ENCODE measurements at regions of chr19 and their contacts with region 1.

Region 1: DNA sequence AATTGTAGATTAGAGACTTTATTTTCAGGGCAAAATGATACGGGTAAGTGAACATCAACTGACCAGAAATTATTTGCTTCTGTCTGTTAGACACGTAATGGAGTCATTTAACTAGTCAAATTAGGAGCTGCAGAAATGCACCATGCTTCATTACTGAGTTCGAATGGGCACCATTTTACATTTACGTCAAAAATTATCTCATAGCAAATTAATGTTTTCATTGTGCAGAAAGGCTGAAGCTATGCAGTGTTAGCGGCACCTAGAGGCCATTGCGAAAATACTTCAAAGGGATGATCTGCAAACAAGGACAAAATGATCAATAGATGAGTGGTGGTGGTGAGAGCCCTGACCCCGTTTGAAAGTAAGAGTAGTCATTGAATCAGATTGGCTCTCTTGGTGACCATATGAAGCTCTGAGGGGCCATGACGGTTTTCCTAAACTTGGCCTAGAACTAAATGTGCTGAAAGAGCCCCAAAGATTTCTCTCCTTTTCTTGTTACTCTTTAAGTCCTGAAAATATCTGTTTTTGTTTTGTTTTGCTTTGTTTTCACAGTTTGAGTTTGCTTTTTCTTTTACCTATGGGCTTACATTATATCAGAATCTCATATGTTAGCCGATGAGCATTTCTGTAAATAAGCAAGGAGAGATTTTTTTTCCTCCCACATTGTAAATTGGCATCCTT is 277.9 kb downstream of the ZNF536 start:
- DNase-seq: peak in 3 of 10 donors; percentile 62 to 74 (median 62)
- H3K4me3 ChIP-seq: peak overlapping the region in 15 of 59 donors; percentile 2 to 40 (median 13)
- H3K27ac ChIP-seq: peak overlapping the region in 53 of 59 donors; percentile 3 to 85 (median 68)
- H3K27me3 ChIP-seq: peaks cover 0 to 48% (median 9%) of the 10 kb centered on the region in 45 donors
- CTCF ChIP-seq: peak; percentile 51 to 96 (median 86)

Region 2: DNA sequence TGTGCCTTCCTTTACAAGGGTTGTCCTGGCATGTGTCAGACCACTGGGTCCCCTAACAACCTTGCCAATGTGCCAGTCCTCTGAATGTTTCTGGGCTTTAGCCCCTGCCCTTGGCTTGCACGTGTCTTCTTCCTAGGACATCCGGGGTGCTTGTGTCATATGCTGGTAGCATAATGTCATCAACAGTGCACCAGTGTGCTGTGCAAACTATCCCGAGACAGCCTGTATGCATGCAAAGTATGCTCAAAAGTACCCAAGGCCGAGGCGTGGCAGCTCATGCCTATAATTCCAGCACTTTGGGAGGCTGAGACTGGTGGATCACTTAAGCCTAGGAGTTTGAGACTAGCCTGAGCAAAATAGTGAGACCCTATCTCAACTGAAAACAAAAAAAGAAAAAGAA is 914.3 kb before region 1 on chr19:
- intact Hi-C with region 1: loop called in 1 of 2 experiments (anchors 10 kb)
- DNase-seq: no peak
- H3K4me3 ChIP-seq: no peak overlapping the region
- H3K27ac ChIP-seq: no peak overlapping the region
- H3K27me3 ChIP-seq: no peaks in the 10 kb centered on the region
- CTCF ChIP-seq: no peak

Region 3: GRCh38 chr19:30046522-30046921 is 603.6 kb before region 1 on chr19:
- intact Hi-C with region 1: loop called in 1 of 2 experiments (anchors 5 kb)
- DNase-seq: peak in 1 of 10 donors; percentile 28
- H3K4me3 ChIP-seq: peak overlapping the region in 15 of 59 donors; percentile 3 to 54 (median 17)
- H3K27ac ChIP-seq: peak overlapping the region in 57 of 59 donors; percentile 1 to 99 (median 92)
- H3K27me3 ChIP-seq: no peaks in the 10 kb centered on the region
- CTCF ChIP-seq: peak; percentile 17 to 82 (median 66)

Region 4: DNA sequence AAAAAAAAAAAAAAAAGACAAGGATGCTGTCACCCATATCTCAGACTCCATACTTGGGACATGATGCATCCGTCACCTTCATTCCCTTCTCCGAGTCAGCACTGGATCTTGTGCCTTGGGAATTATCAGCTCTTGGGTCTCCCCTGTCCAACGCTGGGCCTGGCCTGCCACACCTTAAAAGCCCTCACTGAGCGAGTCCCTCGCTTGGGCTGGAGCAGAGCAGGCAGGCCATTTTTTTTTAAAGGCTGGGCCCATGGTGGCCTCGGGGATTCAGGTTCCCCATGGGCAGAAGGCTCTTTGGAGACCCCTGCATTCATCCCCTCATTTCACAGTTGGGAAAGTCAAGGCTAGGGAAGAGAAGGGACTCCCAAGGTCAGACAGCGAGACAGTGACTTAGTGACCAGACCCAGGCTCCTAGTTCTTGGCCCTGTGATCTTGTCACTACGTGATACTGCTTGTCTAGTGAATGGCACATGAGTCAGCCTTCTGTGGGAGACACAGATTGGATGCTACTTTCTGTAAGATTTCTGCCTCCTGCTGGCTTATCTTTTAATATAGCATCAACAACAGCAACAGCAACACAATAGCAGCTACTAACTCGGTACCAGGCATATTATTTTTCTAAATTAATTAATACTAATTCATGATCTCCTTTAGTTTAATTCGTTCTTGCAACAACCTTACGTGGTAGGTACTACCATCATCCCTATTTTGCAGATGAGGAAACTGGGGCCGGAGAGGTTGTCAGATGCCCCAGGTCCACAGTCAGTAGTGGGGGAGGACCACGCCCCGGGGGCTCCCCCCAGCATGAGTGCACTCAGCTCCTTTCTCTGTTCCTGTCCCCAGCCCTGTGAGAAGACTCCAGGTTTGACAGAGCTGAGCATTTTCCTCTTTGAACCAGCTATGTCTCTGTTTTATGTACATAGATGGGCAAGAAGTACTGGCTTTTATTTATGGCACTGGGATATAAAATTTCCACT is 305.3 kb before region 1 on chr19:
- intact Hi-C with region 1: no loop called
- DNase-seq: peak in 2 of 10 donors; percentile 26 to 35
- H3K4me3 ChIP-seq: no peak overlapping the region
- H3K27ac ChIP-seq: peak overlapping the region in 49 of 59 donors; percentile 5 to 87 (median 67)
- H3K27me3 ChIP-seq: peaks cover 0 to 12% (median 0%) of the 10 kb centered on the region in 45 donors
- CTCF ChIP-seq: peak in 47 of 56 donors; percentile 13 to 66 (median 39)

Region 5: GRCh38 chr19:30374865-30375552 is 275.1 kb before region 1 on chr19:
- intact Hi-C with region 1: loop called in 1 of 2 experiments (anchors 10 kb)
- DNase-seq: peak in 3 of 10 donors; percentile 30 to 47 (median 37)
- H3K4me3 ChIP-seq: peak overlapping the region; percentile 7 to 74 (median 56)
- H3K27ac ChIP-seq: peak overlapping the region; percentile 9 to 99 (median 92)
- H3K27me3 ChIP-seq: peaks cover 0 to 51% (median 11%) of the 10 kb centered on the region in 45 donors
- CTCF ChIP-seq: peak in 14 of 56 donors; percentile 7 to 35 (median 14)

Region 6: GRCh38 chr19:30450100-30450499 is 200.0 kb before region 1 on chr19:
- intact Hi-C with region 1: loop called (anchors 5 to 10 kb)
- DNase-seq: peak in 8 of 10 donors; percentile 46 to 76 (median 63)
- H3K4me3 ChIP-seq: peak overlapping the region; percentile 20 to 69 (median 50)
- H3K27ac ChIP-seq: peak overlapping the region in 55 of 59 donors; percentile 6 to 86 (median 70)
- H3K27me3 ChIP-seq: peaks cover 0 to 28% (median 3%) of the 10 kb centered on the region in 45 donors
- CTCF ChIP-seq: peak in 4 of 56 donors; percentile 9 to 27 (median 14)

Region 7: DNA sequence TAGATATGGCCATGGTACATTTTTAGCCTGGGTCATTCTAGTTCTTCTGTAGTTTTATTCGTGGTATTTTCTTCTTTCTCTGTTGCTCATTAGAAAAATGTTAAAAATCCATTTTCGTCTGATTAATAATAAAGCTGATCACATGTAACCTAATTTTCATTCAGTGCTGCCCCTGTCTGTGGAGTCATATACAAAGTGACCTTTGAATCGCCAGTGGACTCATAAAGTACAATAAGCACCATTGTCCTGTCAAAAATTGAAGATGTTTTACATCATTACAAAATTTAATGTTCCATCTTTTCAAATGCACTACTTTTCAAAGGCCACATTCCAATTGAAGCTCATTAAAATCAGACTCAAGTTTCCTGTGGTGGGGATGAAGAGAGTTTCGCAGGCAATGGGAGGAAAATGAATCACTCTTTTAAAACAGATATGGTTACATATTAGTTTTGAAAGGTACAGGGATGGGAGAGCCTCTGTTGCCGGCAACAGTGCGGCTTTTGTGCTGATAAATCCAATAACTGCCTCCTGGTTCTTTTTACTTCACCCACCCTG is 72.4 kb before region 1 on chr19:
- intact Hi-C with region 1: loop called in 1 of 2 experiments (anchors 2 kb)
- DNase-seq: no peak
- H3K4me3 ChIP-seq: peak overlapping the region in 1 of 59 donors; percentile 4
- H3K27ac ChIP-seq: peak overlapping the region in 56 of 59 donors; percentile 1 to 86 (median 66)
- H3K27me3 ChIP-seq: peaks cover 0 to 9% (median 0%) of the 10 kb centered on the region in 45 donors
- CTCF ChIP-seq: peak in 20 of 56 donors; percentile 5 to 47 (median 23)

Region 8: GRCh38 chr19:30587869-30588268 is 62.2 kb before region 1 on chr19:
- intact Hi-C with region 1: loop called in 1 of 2 experiments (anchors 5 kb)
- DNase-seq: peak in 6 of 10 donors; percentile 25 to 71 (median 61)
- H3K4me3 ChIP-seq: no peak overlapping the region
- H3K27ac ChIP-seq: peak overlapping the region in 53 of 59 donors; percentile 17 to 94 (median 80)
- H3K27me3 ChIP-seq: no peaks in the 10 kb centered on the region
- CTCF ChIP-seq: peak in 19 of 56 donors; percentile 6 to 53 (median 20)

Region 9: GRCh38 chr19:30630289-30631079 is 19.6 kb before region 1 on chr19:
- intact Hi-C with region 1: no loop called
- DNase-seq: peak in 1 of 10 donors; percentile 27
- H3K4me3 ChIP-seq: no peak overlapping the region
- H3K27ac ChIP-seq: peak overlapping the region in 25 of 59 donors; percentile 2 to 83 (median 28)
- H3K27me3 ChIP-seq: peaks cover 0 to 20% (median 0%) of the 10 kb centered on the region in 45 donors
- CTCF ChIP-seq: no peak

Region 10: GRCh38 chr19:30744741-30745475 is 94.8 kb after region 1 on chr19:
- intact Hi-C with region 1: no loop called
- DNase-seq: no peak
- H3K4me3 ChIP-seq: no peak overlapping the region
- H3K27ac ChIP-seq: no peak overlapping the region
- H3K27me3 ChIP-seq: peaks cover 0 to 22% (median 0%) of the 10 kb centered on the region in 45 donors
- CTCF ChIP-seq: no peak